Cardiac septum (tissue), 1 donor: ENCODE measurements at regions of chr1 and their contacts with region 1.

Region 1: DNA sequence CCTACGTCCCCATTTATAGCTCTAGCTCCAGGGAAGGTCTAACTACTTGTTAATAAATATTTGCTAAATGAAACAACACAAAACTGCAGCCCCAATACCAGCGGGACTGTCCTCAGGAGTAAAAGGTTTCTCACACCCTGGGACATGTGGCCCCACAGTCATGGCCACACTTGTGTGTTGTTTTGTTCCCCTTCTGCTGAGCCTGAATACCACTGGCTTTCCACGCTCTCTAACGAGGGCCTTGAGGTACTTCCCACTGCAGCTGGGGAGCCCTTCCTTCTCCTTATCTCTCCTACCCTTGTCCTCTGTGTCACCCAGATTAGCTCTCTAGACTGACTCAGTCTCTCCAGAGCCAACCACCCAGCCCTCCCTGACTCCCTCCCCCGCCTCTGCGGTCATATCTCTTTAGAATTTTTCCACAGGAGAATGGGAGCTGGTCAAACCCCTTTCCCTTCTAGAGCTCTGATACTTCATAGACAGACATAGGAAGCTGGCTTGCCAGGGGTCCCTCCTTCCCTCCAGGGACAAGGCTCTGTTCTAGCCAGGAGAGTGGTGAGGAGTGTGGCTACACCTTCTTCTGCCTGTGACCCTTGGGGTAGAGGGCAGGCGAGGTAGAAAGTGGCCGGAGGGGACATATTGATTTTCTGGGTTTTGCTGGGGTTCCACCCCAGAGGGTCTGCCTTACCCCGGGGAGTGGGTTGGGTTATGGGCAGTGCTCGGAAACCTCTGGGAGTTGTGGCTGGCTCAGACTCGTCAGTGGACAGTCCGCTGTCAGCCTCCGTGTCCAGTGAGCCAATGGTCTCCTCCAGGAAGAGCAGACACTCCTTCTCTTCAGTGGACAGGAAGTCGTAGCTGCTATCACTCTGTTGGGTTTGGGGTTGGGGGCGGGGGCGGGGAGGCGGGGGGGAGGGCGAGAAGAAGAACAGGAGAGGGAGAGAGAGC is 8.1 kb downstream of the C1orf116 start:
- DNase-seq: no peak

Region 2: DNA sequence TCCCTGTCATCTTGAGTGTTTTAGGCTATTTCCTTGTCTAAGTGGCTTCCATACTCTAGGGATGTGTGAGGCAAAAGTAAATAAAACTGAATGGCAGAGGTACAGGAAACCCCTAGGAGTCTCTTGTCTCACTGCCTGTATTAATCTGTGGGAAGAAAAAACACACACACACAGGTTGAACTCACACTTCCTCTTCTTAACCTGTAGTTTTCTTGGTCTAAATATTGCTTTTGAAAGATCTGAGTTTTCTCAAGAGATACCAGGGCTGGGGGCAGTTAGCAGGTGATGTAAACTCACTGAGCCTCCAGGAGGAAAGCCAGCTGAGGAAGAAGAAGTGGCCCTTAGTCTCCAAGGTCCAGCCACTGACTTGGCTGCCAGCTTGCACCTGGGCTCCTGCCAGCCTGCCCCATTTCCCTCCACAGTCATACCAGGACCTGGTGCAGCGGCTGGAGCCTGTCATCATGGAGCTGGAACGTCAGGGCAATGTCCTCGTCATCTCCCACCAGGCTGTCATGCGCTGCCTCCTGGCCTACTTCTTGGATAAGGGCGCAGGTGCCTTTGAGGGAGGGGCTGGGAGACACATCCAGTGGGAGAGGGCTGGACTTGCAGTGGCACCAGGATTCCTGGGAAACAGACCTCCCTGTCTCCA is 45.5 kb after region 1 on chr1:
- intact Hi-C with region 1: loop called (anchors 5 kb)
- DNase-seq: peak; percentile 81